ENCODE measurements at regions of chr17 and their contacts with region 1.

Region 1: DNA sequence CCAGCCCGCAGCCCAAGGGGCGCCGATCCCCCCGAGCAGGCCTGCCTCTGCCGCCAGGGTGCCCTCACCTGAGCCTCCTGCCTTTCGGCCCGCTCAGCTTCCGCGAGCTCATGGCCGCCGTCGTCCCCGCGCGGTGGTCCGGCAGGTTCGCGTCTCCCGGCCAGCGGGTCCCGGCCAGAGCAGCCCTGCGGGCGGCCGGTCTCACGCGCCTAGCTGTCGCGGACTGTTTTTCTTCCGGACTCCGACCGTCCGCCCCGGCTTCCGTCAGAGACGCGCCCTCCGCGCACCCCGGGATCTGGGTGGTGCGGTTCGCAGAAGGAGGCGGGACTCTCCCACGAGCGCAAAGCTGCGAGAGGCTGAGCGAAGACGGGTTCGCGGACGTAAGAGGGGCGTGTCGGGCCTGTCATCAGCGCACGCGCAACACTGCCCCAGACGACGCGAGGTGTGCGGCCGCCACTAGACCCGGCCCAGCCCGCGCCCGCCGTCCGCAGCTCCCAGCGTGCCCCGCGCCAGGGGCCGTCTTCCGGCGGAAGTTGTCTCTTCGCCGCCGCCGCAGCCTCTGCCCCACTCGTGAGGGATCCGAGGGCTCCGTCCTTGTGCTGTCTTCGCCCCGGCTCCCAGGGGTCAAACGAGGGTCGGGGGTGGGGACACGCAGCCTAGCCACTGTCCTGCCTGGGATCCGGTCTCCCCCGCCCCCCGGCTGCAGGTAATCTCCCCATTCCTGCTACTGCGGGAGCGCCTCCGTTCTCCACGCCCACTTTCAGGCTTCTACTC is at the start of gene INPP5K:
- DNase-seq: peak; percentile 94 to 100 (median 97)
- ATAC-seq: peak; percentile 92
- H3K4me3 ChIP-seq: peak within 1 kb of the TSS; percentile 98
- H3K4me3 Mint-ChIP-seq: peak within 1 kb of the TSS; percentile 94
- H3K27ac ChIP-seq: peak within 1 kb of the TSS; percentile 88 to 93
- H3K27ac Mint-ChIP-seq: peak within 1 kb of the TSS; percentile 92
- H3K4me1 ChIP-seq: peaks cover 39% of the 10 kb centered on the region
- H3K4me1 Mint-ChIP-seq: peaks cover 26% of the 10 kb centered on the region
- H3K27me3 ChIP-seq: no peaks in the 10 kb centered on the region
- H3K27me3 Mint-ChIP-seq: no peaks in the 10 kb centered on the region
- CTCF ChIP-seq: no peak
- total RNA-seq, gene INPP5K: 199 to 207 TPM

Region 2: GRCh38 chr17:1267471-1267947 is 249.1 kb before region 1 on chr17:
- CTCF ChIA-PET with region 1: no interaction called
- POLR2A ChIA-PET with region 1: interaction called, 3 read pairs
- intact Hi-C with region 1: loop called in 1 of 2 experiments (anchors 5 kb)
- DNase-seq: peak in 1 of 14 experiments; percentile 24
- ATAC-seq: no peak
- H3K4me3 ChIP-seq: peak overlapping the region; percentile 78
- H3K4me3 Mint-ChIP-seq: peak overlapping the region; percentile 78
- H3K27ac ChIP-seq: peak overlapping the region in 1 of 2 donors; percentile 58
- H3K27ac Mint-ChIP-seq: peak overlapping the region; percentile 3
- H3K4me1 ChIP-seq: peaks cover 18% of the 10 kb centered on the region
- H3K4me1 Mint-ChIP-seq: peaks cover 11% of the 10 kb centered on the region
- H3K27me3 ChIP-seq: peaks cover 24 to 29% of the 10 kb centered on the region in 2 experiments
- H3K27me3 Mint-ChIP-seq: peaks cover 24% of the 10 kb centered on the region
- CTCF ChIP-seq: no peak

Region 3: DNA sequence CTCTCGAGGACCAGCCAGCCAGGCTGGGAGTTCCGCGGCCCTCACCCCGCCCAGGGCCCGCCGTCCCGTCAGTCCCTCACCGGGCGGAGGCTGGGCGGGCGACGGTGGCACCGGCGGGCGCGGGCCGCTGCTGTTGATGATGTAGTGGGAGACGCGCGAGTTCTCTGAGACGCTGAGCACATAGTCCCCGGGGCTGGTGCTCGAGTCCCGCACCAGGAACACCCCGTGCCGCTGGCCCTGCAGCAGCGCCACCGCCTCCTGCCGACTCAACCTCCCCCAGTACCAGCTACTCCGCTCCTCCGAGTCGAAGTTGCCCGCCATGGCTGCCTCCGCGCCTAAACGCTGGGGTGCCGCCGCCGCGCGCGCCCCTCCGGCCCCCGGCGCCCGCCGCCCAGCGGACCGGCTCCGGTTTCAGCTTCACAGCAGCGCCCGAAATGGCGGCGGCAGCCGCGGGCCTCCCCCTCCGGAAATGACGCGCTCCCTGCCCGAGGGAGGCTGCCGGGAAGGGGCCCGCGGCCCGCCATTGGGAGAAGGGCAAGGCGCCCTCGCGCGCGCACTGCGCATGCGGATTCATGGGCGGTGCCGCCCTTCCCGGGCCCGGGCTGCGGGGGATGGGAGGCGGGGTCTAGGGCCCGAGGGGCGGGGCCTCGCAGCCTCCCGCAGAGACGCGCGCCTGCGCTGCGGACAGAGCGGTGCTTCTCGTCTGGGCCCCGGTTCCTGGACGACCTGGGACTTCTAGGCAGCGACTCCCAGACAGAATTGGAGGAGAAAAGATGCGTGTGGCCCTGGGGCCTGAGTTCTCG is 60.6 kb before region 1 on chr17 and contains the start of gene CRK:
- CTCF ChIA-PET with region 1: interaction called, 17 read pairs
- POLR2A ChIA-PET with region 1: interaction called, 25 read pairs
- intact Hi-C with region 1: loop called (anchors 1 kb)
- DNase-seq: peak; percentile 95 to 99 (median 99)
- ATAC-seq: peak; percentile 91
- H3K4me3 ChIP-seq: peak within 1 kb of the TSS; percentile 80
- H3K4me3 Mint-ChIP-seq: peak within 1 kb of the TSS; percentile 96
- H3K27ac ChIP-seq: peak within 1 kb of the TSS; percentile 88 to 91
- H3K27ac Mint-ChIP-seq: peak within 1 kb of the TSS; percentile 81
- H3K4me1 ChIP-seq: peaks cover 54% of the 10 kb centered on the region
- H3K4me1 Mint-ChIP-seq: peaks cover 51% of the 10 kb centered on the region
- H3K27me3 ChIP-seq: no peaks in the 10 kb centered on the region
- H3K27me3 Mint-ChIP-seq: no peaks in the 10 kb centered on the region
- CTCF ChIP-seq: no peak
- total RNA-seq, gene CRK: 13.6 to 14.5 TPM

Region 4: DNA sequence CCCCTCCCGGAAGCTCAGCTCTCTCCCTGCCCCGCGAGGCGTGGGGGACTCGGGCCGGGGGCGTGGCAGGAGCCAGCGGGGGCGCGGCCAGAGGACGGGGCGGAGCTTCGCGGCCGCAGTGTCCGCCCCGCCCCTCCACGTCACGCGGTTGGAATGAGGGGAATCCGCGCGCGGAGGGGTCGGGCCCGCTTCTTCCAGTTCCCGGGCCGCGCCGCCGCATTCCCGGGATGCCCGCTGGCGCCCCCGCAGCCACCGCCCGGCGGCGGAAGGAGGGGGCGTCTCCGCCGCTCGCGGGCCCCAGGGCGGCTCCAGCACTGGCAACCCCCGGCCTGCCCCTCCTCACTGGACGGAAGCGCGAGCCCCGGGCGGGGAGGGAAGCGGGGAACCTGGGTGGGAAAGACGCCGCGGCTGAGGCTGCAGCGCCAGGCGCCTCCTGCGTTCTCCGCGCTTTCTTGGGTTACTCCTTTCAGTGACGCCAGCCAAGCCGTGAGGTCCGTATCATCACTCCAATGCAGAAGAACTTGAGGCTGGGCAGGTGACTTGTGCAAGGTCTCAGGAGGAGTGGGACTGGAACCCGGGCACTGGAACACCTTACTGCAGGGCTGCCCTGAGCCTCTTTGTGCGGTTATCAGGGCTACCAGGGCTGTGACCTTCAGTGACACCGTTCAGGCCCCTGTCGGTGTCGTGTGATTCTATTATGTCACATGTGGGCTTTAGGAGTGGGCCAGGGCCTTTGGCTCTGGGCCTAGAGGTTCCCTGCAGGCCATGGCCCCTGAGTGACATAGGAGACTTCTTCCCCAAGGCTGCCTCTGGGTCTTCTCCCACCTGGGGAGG is 28.3 kb before region 1 on chr17:
- CTCF ChIA-PET with region 1: interaction called, 12 read pairs
- POLR2A ChIA-PET with region 1: interaction called, 36 read pairs
- intact Hi-C with region 1: loop called (anchors 2 kb)
- DNase-seq: peak; percentile 40 to 88 (median 68)
- ATAC-seq: peak; percentile 34
- H3K4me3 ChIP-seq: peak overlapping the region; percentile 61
- H3K4me3 Mint-ChIP-seq: peak overlapping the region; percentile 88
- H3K27ac ChIP-seq: peak overlapping the region; percentile 24 to 35
- H3K27ac Mint-ChIP-seq: peak overlapping the region; percentile 91
- H3K4me1 ChIP-seq: peaks cover 78% of the 10 kb centered on the region
- H3K4me1 Mint-ChIP-seq: peaks cover 47% of the 10 kb centered on the region
- H3K27me3 ChIP-seq: no peaks in the 10 kb centered on the region
- H3K27me3 Mint-ChIP-seq: no peaks in the 10 kb centered on the region
- CTCF ChIP-seq: no peak

Region 5: GRCh38 chr17:1546292-1546922 is 29.8 kb after region 1 on chr17:
- CTCF ChIA-PET with region 1: no interaction called
- POLR2A ChIA-PET with region 1: no interaction called
- intact Hi-C with region 1: no loop called
- DNase-seq: no peak
- ATAC-seq: no peak
- H3K4me3 ChIP-seq: no peak overlapping the region
- H3K4me3 Mint-ChIP-seq: no peak overlapping the region
- H3K27ac ChIP-seq: no peak overlapping the region
- H3K27ac Mint-ChIP-seq: no peak overlapping the region
- H3K4me1 ChIP-seq: no peaks in the 10 kb centered on the region
- H3K4me1 Mint-ChIP-seq: no peaks in the 10 kb centered on the region
- H3K27me3 ChIP-seq: no peaks in the 10 kb centered on the region
- H3K27me3 Mint-ChIP-seq: no peaks in the 10 kb centered on the region
- CTCF ChIP-seq: no peak

Region 6: DNA sequence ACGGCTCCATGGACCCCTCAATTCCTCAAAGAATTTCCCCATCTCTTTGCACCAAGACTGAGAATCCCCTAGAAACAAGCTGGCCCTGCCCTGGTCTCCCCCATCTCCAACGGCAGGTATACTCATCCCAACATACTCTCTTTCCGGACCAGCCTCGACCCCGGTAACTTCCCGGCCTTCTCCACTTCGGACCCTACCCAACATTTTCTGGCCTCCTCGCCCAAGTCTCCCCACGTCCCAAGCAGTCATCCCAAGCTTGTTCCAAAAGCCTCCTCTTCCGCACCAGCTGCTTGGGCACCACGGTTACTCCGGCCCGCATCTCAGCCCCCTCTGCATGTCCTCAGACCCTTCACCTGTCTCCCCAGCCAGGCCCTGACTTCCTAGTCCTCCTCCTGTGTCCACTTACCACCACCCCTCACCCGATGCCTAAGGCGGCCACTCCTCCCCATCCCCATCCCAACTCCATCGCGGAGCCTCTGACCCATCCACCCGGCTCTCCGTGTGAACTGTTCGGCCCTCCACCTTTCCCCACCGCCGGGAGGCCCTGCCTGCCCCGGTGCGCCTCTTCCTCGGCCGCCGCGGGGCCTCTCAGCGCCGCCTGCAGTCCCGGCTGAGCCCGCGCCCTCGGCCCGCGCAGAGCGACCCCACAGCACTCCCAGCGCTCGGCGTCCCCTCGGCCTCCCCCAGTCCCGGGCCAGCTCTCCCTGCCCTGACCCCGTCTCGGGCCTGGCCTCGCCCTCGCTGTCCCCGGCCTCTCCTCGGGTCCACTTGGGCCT is 45.0 kb after region 1 on chr17:
- CTCF ChIA-PET with region 1: no interaction called
- POLR2A ChIA-PET with region 1: interaction called, 6 read pairs
- intact Hi-C with region 1: loop called in 1 of 2 experiments (anchors 2 kb)
- DNase-seq: peak in 11 of 14 experiments; percentile 14 to 68 (median 33)
- ATAC-seq: peak; percentile 40
- H3K4me3 ChIP-seq: peak overlapping the region; percentile 51
- H3K4me3 Mint-ChIP-seq: peak overlapping the region; percentile 88
- H3K27ac ChIP-seq: no peak overlapping the region
- H3K27ac Mint-ChIP-seq: peak overlapping the region; percentile 65
- H3K4me1 ChIP-seq: peaks cover 41% of the 10 kb centered on the region
- H3K4me1 Mint-ChIP-seq: peaks cover 37% of the 10 kb centered on the region
- H3K27me3 ChIP-seq: no peaks in the 10 kb centered on the region
- H3K27me3 Mint-ChIP-seq: no peaks in the 10 kb centered on the region
- CTCF ChIP-seq: peak; percentile 23

Region 7: GRCh38 chr17:1648963-1649843 is 132.6 kb after region 1 on chr17:
- CTCF ChIA-PET with region 1: no interaction called
- POLR2A ChIA-PET with region 1: interaction called, 16 read pairs
- intact Hi-C with region 1: no loop called
- DNase-seq: peak; percentile 89 to 99 (median 95)
- ATAC-seq: peak; percentile 78
- H3K4me3 ChIP-seq: peak overlapping the region; percentile 51
- H3K4me3 Mint-ChIP-seq: peak overlapping the region; percentile 79
- H3K27ac ChIP-seq: peak overlapping the region; percentile 45 to 53
- H3K27ac Mint-ChIP-seq: peak overlapping the region; percentile 33
- H3K4me1 ChIP-seq: peaks cover 41% of the 10 kb centered on the region
- H3K4me1 Mint-ChIP-seq: peaks cover 18% of the 10 kb centered on the region
- H3K27me3 ChIP-seq: no peaks in the 10 kb centered on the region
- H3K27me3 Mint-ChIP-seq: no peaks in the 10 kb centered on the region
- CTCF ChIP-seq: peak; percentile 75

Region 8: DNA sequence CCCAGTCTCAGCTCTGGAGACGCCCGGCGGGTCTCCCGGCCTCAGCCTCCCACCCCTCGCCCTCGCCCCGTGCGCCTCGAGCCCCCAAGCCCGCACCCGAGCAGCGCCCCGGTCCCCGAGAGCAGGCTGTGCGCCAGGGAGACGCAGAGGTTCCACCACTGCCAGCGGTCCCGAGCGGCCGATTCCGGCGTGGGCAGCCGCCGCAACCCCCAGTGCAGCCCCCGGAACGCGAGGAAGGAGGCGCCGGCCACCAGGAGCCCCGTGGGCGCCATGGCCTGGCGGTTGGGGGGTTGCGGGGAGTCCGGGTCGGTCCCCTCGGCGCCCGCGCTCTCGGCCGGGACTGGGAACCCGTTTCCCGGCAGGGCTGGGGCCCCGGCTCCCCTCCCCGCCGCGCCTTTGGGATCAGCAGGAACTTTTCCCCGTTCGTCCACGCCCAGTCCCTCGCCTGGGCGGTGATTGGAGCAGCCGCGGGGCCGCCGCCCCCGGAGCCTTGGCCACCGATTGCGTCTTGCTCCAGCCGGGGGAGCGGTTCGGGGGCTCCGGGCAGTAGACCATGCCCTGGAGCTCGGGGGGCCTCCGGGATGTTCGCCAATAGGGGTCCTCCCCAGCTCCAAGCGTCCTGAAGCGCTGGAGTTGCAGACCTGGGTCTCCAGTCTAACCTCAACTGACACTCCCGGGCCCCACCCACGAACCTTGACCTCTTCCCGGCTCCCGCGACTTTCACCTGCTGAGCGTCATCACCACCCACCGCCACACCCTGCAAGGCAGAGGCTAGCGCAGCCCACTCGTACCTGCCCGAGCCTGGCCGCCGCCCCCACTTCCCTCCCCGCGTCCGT is 193.6 kb after region 1 on chr17 and contains the start of gene TLCD2:
- CTCF ChIA-PET with region 1: no interaction called
- POLR2A ChIA-PET with region 1: no interaction called
- intact Hi-C with region 1: no loop called
- DNase-seq: peak in 3 of 14 experiments; percentile 31 to 39 (median 32)
- ATAC-seq: peak; percentile 15
- H3K4me3 ChIP-seq: peak within 1 kb of the TSS; percentile 61
- H3K4me3 Mint-ChIP-seq: peak within 1 kb of the TSS; percentile 86
- H3K27ac ChIP-seq: no peak within 1 kb of the TSS
- H3K27ac Mint-ChIP-seq: peak within 1 kb of the TSS; percentile 48
- H3K4me1 ChIP-seq: peaks cover 61% of the 10 kb centered on the region
- H3K4me1 Mint-ChIP-seq: peaks cover 28% of the 10 kb centered on the region
- H3K27me3 ChIP-seq: peaks cover 19 to 28% of the 10 kb centered on the region in 2 experiments
- H3K27me3 Mint-ChIP-seq: peaks cover 17% of the 10 kb centered on the region
- CTCF ChIP-seq: no peak
- total RNA-seq, gene TLCD2: 0.19 to 0.34 TPM

Measured in CD4-positive, alpha-beta T cell (primary cell).